ENCODE measurements at regions of chr1 and their contacts with region 1.

Region 1: DNA sequence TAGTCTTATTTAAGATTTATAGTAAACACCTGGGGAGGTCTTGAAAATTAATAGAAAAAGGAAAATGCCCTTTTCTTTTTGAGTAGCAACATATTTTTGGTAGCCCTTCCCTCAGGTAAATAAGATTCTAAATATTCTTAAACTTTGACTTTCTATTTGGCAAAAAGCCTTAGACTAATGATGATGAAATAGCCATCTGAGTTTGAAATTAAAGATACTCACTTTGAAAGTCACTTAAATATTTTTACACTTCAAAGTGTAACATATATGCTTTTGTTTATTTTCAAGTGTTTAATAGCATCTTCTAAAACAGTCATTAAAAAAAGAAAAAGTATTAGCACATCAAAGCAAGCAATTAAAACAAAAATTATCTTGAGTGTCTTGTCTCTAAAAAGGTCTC is 135.1 kb downstream of the NEK7 start:
- DNase-seq: no peak
- ATAC-seq: no peak
- H3K4me3 ChIP-seq: no peak overlapping the region
- H3K4me3 Mint-ChIP-seq: no peak overlapping the region
- H3K27ac ChIP-seq: no peak overlapping the region
- H3K27ac Mint-ChIP-seq: peak overlapping the region; percentile 4
- H3K4me1 ChIP-seq: no peaks in the 10 kb centered on the region
- H3K4me1 Mint-ChIP-seq: peaks cover 24% of the 10 kb centered on the region
- H3K27me3 ChIP-seq: no peaks in the 10 kb centered on the region
- H3K27me3 Mint-ChIP-seq: no peaks in the 10 kb centered on the region
- CTCF ChIP-seq: no peak

Region 2: GRCh38 chr1:197808880-197809279 is 483.0 kb before region 1 on chr1:
- CTCF ChIA-PET with region 1: no interaction called
- POLR2A ChIA-PET with region 1: no interaction called
- intact Hi-C with region 1: no loop called
- DNase-seq: peak in 2 of 9 experiments; percentile 18 to 33
- ATAC-seq: no peak
- H3K4me3 ChIP-seq: no peak overlapping the region
- H3K4me3 Mint-ChIP-seq: no peak overlapping the region
- H3K27ac ChIP-seq: no peak overlapping the region
- H3K27ac Mint-ChIP-seq: no peak overlapping the region
- H3K4me1 ChIP-seq: no peaks in the 10 kb centered on the region
- H3K4me1 Mint-ChIP-seq: peaks cover 8% of the 10 kb centered on the region
- H3K27me3 ChIP-seq: no peaks in the 10 kb centered on the region
- H3K27me3 Mint-ChIP-seq: no peaks in the 10 kb centered on the region
- CTCF ChIP-seq: no peak

Region 3: GRCh38 chr1:198307411-198307810 is 15.5 kb after region 1 on chr1:
- CTCF ChIA-PET with region 1: no interaction called
- POLR2A ChIA-PET with region 1: no interaction called
- intact Hi-C with region 1: loop called in 1 of 2 experiments (anchors 2 kb)
- DNase-seq: no peak
- ATAC-seq: no peak
- H3K4me3 ChIP-seq: no peak overlapping the region
- H3K4me3 Mint-ChIP-seq: no peak overlapping the region
- H3K27ac ChIP-seq: no peak overlapping the region
- H3K27ac Mint-ChIP-seq: no peak overlapping the region
- H3K4me1 ChIP-seq: no peaks in the 10 kb centered on the region
- H3K4me1 Mint-ChIP-seq: peaks cover 5% of the 10 kb centered on the region
- H3K27me3 ChIP-seq: no peaks in the 10 kb centered on the region
- H3K27me3 Mint-ChIP-seq: no peaks in the 10 kb centered on the region
- CTCF ChIP-seq: no peak

Region 4: GRCh38 chr1:198318085-198318484 is 26.2 kb after region 1 on chr1:
- CTCF ChIA-PET with region 1: no interaction called
- POLR2A ChIA-PET with region 1: no interaction called
- intact Hi-C with region 1: no loop called
- DNase-seq: no peak
- ATAC-seq: no peak
- H3K4me3 ChIP-seq: no peak overlapping the region
- H3K4me3 Mint-ChIP-seq: no peak overlapping the region
- H3K27ac ChIP-seq: no peak overlapping the region
- H3K27ac Mint-ChIP-seq: peak overlapping the region; percentile 29
- H3K4me1 ChIP-seq: no peaks in the 10 kb centered on the region
- H3K4me1 Mint-ChIP-seq: peaks cover 21% of the 10 kb centered on the region
- H3K27me3 ChIP-seq: no peaks in the 10 kb centered on the region
- H3K27me3 Mint-ChIP-seq: no peaks in the 10 kb centered on the region
- CTCF ChIP-seq: no peak

Region 5: GRCh38 chr1:198346178-198346577 is 54.3 kb after region 1 on chr1:
- CTCF ChIA-PET with region 1: no interaction called
- POLR2A ChIA-PET with region 1: no interaction called
- intact Hi-C with region 1: no loop called
- DNase-seq: no peak
- ATAC-seq: no peak
- H3K4me3 ChIP-seq: no peak overlapping the region
- H3K4me3 Mint-ChIP-seq: no peak overlapping the region
- H3K27ac ChIP-seq: no peak overlapping the region
- H3K27ac Mint-ChIP-seq: no peak overlapping the region
- H3K4me1 ChIP-seq: no peaks in the 10 kb centered on the region
- H3K4me1 Mint-ChIP-seq: no peaks in the 10 kb centered on the region
- H3K27me3 ChIP-seq: no peaks in the 10 kb centered on the region
- H3K27me3 Mint-ChIP-seq: no peaks in the 10 kb centered on the region
- CTCF ChIP-seq: no peak

Region 6: GRCh38 chr1:200242110-200243041 is 1950.5 kb after region 1 on chr1:
- CTCF ChIA-PET with region 1: no interaction called
- POLR2A ChIA-PET with region 1: no interaction called
- intact Hi-C with region 1: no loop called
- DNase-seq: no peak
- ATAC-seq: no peak
- H3K4me3 ChIP-seq: no peak overlapping the region
- H3K4me3 Mint-ChIP-seq: no peak overlapping the region
- H3K27ac ChIP-seq: no peak overlapping the region
- H3K27ac Mint-ChIP-seq: no peak overlapping the region
- H3K4me1 ChIP-seq: no peaks in the 10 kb centered on the region
- H3K4me1 Mint-ChIP-seq: peaks cover 6% of the 10 kb centered on the region
- H3K27me3 ChIP-seq: no peaks in the 10 kb centered on the region
- H3K27me3 Mint-ChIP-seq: peaks cover 24% of the 10 kb centered on the region
- CTCF ChIP-seq: no peak